ENCODE measurements at regions of chr1 and their contacts with region 1.

Region 1: DNA sequence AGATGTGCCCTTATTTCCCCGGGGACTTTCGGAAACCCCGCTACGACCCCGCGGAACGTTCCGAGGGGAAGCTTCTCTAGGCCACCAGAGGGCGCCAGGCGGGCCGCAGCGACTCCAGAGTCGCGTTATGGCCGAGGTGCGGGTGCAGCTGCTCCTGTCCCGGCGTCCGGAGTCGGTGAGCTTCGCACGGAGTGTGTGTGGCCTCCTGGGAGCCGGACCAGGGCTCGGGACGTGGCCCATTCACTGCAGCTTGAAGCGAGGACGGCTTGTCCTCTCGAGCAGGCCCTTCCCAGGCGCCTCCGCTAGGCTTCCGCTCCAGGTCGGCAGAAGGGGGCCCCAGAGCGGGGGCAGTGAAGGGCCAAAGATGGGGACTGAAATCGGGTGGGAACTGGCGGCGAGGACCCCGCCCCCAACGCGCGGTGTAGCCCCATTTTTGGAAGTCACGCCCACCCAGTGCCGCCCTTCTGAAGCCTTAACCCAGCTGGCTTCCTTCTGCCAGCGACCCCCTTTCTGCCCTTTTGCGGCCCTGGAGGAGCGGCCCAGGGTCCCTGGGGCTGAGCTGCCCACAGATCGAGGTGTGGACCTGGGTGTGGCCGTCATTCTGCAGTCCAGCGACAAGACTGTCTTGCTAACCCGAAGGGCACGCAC is at the start of gene NUDT17:
- DNase-seq: peak; percentile 82 to 89 (median 86)
- ATAC-seq: peak; percentile 89
- H3K4me3 ChIP-seq: peak within 1 kb of the TSS; percentile 54
- H3K27ac ChIP-seq: peak within 1 kb of the TSS; percentile 59
- H3K4me1 ChIP-seq: peaks cover 7 to 20% of the 10 kb centered on the region in 2 experiments; a peak in 4 of 5 replicates
- H3K27me3 ChIP-seq: no peaks in the 10 kb centered on the region
- CTCF ChIP-seq: peak; percentile 85 to 96 (median 92)
- EP300 ChIP-seq: no peak
- POLR2A ChIP-seq: peak; percentile 75
- RAD21 ChIP-seq: peak; percentile 71 to 77
- polyA plus RNA-seq, gene NUDT17: 2.1 to 3.1 TPM

Region 2: DNA sequence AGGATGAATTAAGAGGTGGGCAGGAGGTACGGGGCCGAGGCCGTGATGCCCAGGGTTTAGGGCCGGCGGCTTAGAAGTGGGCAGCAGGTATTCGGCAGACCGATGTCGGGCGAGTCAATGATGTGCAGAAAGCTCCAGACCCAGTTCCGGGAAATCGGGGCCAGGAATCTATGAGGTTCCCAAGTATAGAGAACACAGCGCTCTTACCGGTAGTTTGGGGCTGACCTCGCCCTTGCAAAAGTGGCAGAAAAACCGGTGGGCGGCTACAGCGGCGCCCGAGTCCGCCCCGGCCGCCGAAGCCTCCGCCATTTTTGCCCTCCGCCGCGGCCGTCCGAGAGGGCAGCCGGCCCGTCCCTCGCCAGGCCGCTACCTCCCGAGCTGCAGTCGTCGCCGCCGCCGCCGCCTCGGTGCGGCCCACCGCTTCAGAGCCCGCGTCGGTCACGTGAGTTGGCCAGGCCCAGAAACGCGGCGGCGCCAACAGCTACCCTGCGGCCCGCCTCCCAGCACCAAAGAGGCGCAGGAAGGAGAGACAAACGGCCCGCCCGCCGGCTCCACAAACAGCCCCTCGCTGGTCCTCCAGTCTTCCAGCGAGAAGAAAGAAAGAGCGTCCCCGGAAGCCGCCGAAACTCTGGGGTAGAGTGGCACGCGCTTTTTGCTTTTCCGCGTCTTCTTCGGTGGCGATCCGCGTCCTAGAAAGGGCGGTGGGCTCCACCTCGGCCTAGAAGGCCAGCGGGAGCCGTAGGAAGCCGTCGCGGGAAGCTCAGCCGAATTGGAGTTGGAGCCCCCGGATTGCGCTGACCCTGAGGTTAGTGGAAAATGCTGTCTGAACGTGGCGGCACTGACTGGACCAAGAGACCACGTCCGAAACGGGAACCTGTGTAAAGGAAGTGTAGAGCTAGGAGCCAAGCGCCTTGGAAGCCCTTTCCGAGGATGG is 21.8 kb before region 1 on chr1 and contains the starts of genes POLR3C and RNF115:
- CTCF ChIA-PET with region 1: no interaction called
- POLR2A ChIA-PET with region 1: interaction called, 40 read pairs
- in situ Hi-C with region 1: no loop called
- intact Hi-C with region 1: no loop called
- DNase-seq: peak; percentile 87 to 93 (median 87)
- ATAC-seq: peak; percentile 93
- H3K4me3 ChIP-seq: peak within 1 kb of the TSS; percentile 77
- H3K27ac ChIP-seq: peak within 1 kb of the TSS; percentile 92
- H3K4me1 ChIP-seq: peaks cover 8 to 20% of the 10 kb centered on the region in 2 experiments
- H3K27me3 ChIP-seq: no peaks in the 10 kb centered on the region
- CTCF ChIP-seq: no peak
- EP300 ChIP-seq: no peak
- POLR2A ChIP-seq: peak; percentile 90
- RAD21 ChIP-seq: no peak
- polyA plus RNA-seq, gene POLR3C: 19.7 to 49.9 TPM
- polyA plus RNA-seq, gene RNF115: 1.9 to 2.0 TPM

Region 3: DNA sequence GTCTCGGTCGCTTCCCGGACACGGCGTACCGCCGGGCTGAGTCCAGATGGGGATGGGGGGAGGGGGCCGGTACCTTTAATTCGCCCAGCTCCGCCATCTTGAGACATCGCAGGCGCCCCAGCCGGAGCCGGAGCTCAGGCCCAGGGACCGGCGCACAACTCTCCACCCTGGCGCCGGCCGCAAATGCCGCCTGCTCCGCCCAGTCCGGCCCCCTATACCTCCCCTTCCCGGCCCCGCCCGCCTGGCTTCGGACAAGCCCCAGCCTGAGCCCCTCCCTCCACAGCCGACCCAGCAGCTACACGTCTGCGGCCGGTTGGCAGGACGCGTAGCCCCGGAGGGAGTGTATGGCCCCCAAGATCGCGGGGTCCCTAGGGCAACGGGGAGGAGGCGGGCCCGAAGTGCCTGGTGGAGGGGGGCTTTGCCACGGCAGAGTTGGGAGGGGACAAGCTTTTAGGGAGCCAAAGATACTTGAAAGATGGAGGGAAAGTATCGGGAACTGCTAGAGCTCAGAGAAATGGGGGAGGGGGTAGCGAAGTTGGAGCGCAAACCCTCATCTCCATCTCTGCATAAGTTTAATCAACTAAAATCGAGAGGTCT is 13.4 kb after region 1 on chr1 and contains the start of gene PIAS3:
- CTCF ChIA-PET with region 1: interaction called, 4 read pairs
- POLR2A ChIA-PET with region 1: interaction called, 35 read pairs
- in situ Hi-C with region 1: no loop called
- intact Hi-C with region 1: loop called (anchors 2 kb)
- DNase-seq: peak; percentile 94 to 97 (median 96)
- ATAC-seq: peak; percentile 95
- H3K4me3 ChIP-seq: peak within 1 kb of the TSS; percentile 82
- H3K27ac ChIP-seq: peak within 1 kb of the TSS; percentile 73
- H3K4me1 ChIP-seq: peaks cover 10 to 18% of the 10 kb centered on the region in 2 experiments; a peak in 4 of 5 replicates
- H3K27me3 ChIP-seq: no peaks in the 10 kb centered on the region
- CTCF ChIP-seq: no peak
- EP300 ChIP-seq: no peak
- POLR2A ChIP-seq: peak; percentile 67
- RAD21 ChIP-seq: no peak
- polyA plus RNA-seq, gene PIAS3: 1.1 to 1.5 TPM

Region 4: DNA sequence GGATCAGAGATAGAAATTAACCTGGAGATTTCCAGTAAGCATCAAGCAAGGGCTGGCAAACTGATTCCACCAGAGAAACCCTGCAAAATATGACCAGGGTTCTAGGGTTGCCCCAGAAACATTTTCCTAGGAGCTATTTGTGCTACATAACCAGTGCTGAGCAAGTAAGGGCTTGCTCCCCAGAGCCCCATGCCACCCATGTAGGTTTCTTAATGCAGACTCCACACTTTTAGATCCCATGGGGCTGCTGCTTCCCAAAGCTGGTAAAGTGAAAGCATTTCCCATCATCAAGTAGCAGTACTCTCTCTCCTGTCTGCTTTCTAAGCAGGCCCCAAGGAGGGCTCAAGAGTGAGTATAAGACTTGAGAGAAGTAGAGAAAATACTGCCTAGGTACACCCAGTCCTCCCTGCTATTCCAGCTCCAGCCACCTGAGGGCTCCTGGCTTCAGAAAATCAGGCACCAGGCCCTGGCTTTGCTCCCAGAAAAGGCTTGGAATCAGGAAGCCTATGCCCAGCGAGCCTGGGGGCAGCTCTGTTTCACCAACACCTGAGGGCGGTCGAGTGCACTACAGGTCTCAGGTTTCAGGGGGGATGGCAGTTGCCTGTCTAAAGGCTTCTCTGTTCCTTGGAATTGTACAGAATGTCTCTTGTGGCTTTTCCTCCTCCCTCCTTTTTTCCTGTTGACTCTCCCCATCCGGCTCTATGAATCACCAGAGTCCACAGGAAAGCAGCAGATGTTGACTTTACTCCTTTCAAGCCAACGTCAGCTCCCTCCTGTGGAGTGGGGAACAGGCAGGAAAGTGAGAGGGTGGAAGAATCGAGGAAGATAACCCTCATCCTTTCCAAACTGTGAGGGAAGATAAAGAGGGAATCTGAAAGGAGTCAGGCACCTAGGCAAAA is 46.2 kb after region 1 on chr1:
- CTCF ChIA-PET with region 1: no interaction called
- POLR2A ChIA-PET with region 1: interaction called, 6 read pairs
- in situ Hi-C with region 1: no loop called
- intact Hi-C with region 1: loop called (anchors 2 kb)
- DNase-seq: peak; percentile 86 to 89 (median 87)
- ATAC-seq: peak; percentile 92
- H3K4me3 ChIP-seq: peak overlapping the region; percentile 4; the same call in 1 of the 2 replicates
- H3K27ac ChIP-seq: peak overlapping the region; percentile 40; the same call in 2 of the 3 replicates
- H3K4me1 ChIP-seq: peaks cover 15 to 28% of the 10 kb centered on the region in 2 experiments
- H3K27me3 ChIP-seq: no peaks in the 10 kb centered on the region
- CTCF ChIP-seq: peak; percentile 94 to 97 (median 95)
- EP300 ChIP-seq: no peak
- POLR2A ChIP-seq: no peak
- RAD21 ChIP-seq: peak; percentile 90 to 93

Region 5: DNA sequence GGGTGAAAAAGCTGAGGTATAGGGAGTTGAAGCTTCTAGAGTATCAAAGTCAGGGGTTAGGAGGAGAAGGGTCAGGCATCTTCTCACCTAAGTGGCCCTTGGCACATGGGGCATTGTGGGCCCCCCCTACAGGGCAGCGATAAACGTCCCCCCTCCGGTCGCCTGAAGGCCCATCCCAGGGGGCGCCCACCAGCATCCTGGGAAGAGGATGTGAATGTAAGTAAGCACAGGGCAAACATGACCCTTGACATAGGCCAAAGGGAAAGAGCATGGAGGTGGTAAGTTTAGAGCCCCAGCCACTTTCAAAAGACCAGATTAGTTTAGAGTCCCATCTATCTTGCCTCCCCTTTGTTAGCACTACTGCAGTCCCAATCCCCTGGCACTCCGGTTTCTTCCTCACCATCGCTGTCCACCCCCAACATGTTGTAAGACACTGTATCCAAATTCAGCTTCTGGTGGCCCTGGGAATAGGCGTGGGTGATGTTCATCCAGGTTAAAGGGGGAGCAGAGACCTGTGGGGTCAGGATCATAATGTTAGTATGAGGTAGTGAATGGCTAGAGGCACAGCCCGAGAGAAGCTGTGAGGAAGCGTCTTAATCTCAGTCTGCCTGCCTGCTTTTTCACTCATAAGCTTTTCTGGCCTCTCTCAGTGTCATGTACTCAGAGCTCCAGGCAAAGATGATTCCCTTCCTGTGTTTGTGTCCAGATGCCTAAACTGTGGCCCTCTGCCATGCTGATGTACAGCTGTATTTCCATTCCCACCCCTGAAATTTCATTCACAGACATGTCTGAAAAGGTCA is 61.5 kb after region 1 on chr1:
- CTCF ChIA-PET with region 1: interaction called, 11 read pairs
- POLR2A ChIA-PET with region 1: no interaction called
- in situ Hi-C with region 1: no loop called
- intact Hi-C with region 1: loop called (anchors 5 kb)
- DNase-seq: peak in 1 of 4 experiments; percentile 8
- ATAC-seq: no peak; the same call in 2 of the 3 replicates
- H3K4me3 ChIP-seq: no peak overlapping the region
- H3K27ac ChIP-seq: no peak overlapping the region
- H3K4me1 ChIP-seq: no peaks in the 10 kb centered on the region; a peak in 1 of 5 replicates
- H3K27me3 ChIP-seq: no peaks in the 10 kb centered on the region
- CTCF ChIP-seq: no peak
- EP300 ChIP-seq: no peak
- POLR2A ChIP-seq: no peak
- RAD21 ChIP-seq: no peak

Region 6: GRCh38 chr1:145912128-145912641 is 66.5 kb after region 1 on chr1:
- CTCF ChIA-PET with region 1: interaction called, 11 read pairs
- POLR2A ChIA-PET with region 1: no interaction called
- in situ Hi-C with region 1: no loop called
- intact Hi-C with region 1: loop called (anchors 5 kb)
- DNase-seq: no peak
- ATAC-seq: no peak
- H3K4me3 ChIP-seq: no peak overlapping the region
- H3K27ac ChIP-seq: no peak overlapping the region
- H3K4me1 ChIP-seq: no peaks in the 10 kb centered on the region; a peak in 1 of 5 replicates
- H3K27me3 ChIP-seq: no peaks in the 10 kb centered on the region
- CTCF ChIP-seq: no peak
- EP300 ChIP-seq: no peak
- POLR2A ChIP-seq: no peak
- RAD21 ChIP-seq: no peak

Region 7: DNA sequence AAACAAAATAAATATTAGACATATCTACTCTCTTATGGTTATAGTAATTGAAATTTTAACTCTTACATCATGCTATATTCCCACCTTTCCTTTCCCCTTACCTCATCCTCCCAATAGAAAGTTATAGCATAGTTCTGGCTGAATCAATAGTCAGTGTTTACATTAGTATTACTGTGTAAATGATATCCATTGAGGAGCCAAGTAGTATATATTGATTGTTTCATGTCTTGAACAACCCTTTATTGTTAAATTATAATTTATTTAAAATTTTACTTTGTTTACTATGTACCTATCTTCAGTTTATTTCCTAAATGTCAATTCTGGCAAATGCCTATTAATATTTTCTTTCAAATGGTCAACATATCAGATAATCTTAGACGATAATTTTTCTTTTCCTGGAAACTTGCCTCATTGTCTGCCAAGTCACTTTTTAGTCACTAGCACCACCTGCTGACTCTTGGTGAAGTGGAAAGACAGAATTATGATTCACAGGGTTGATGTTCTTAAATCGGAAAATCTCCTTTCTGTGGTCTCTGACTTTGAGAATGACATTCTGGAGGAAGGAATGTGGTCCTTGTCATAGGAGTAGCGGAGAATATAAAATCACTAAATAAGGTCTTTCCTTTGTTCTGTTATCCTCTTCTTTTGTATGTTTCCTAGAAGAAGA is 167.2 kb after region 1 on chr1:
- CTCF ChIA-PET with region 1: interaction called, 16 read pairs
- POLR2A ChIA-PET with region 1: no interaction called
- in situ Hi-C with region 1: loop called (anchors 5 kb)
- intact Hi-C with region 1: loop called (anchors 1 kb)
- DNase-seq: peak; percentile 51 to 83 (median 56)
- ATAC-seq: peak; percentile 84
- H3K4me3 ChIP-seq: no peak overlapping the region
- H3K27ac ChIP-seq: no peak overlapping the region
- H3K4me1 ChIP-seq: peaks cover 2 to 6% of the 10 kb centered on the region in 2 experiments
- H3K27me3 ChIP-seq: no peaks in the 10 kb centered on the region
- CTCF ChIP-seq: peak; percentile 78 to 97 (median 82)
- EP300 ChIP-seq: peak; percentile 26; the same call in 1 of the 2 replicates
- POLR2A ChIP-seq: no peak
- RAD21 ChIP-seq: peak; percentile 98

Measured in K562 (cell line).